ENCODE measurements at regions of chr4 and their contacts with region 1.

Region 1: DNA sequence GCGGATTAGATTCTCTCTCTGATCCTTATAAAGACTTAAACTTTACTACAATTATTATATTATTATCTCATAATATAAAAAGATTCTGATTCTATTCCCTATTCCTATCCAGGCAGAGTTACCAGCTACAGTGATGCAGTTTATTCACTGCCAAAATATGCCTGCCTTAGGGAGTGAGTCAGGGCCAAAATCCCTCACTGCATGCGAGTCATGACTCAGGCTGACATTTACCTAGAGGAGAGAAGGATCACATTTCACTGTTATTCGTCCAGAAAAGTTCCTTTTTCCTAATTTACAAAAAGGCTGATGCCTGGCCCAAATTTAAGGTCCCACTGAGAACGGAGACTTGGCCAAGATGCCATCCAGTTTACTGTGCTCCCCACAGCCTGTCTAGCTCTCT is 168.5 kb upstream of the LDB2 start:
- DNase-seq: peak in 1 of 2 donors; percentile 47
- ATAC-seq: peak; percentile 71
- H3K4me3 ChIP-seq: no peak overlapping the region
- H3K27ac ChIP-seq: peak overlapping the region in 1 of 2 donors; percentile 6
- H3K4me1 ChIP-seq: peaks cover 0 to 6% of the 10 kb centered on the region in 2 donors
- H3K27me3 ChIP-seq: no peaks in the 10 kb centered on the region

Region 2: GRCh38 chr4:17027495-17027894 is 39.5 kb before region 1 on chr4:
- intact Hi-C with region 1: loop called in 1 of 2 experiments (anchors 5 kb)
- DNase-seq: no peak
- ATAC-seq: no peak
- H3K4me3 ChIP-seq: no peak overlapping the region
- H3K27ac ChIP-seq: no peak overlapping the region
- H3K4me1 ChIP-seq: peaks cover 0 to 2% of the 10 kb centered on the region in 2 donors
- H3K27me3 ChIP-seq: peaks cover 0 to 2% of the 10 kb centered on the region in 2 donors

Region 3: GRCh38 chr4:17567271-17567670 is 500.3 kb after region 1 on chr4:
- intact Hi-C with region 1: no loop called
- DNase-seq: no peak
- ATAC-seq: no peak
- H3K4me3 ChIP-seq: no peak overlapping the region
- H3K27ac ChIP-seq: no peak overlapping the region
- H3K4me1 ChIP-seq: no peaks in the 10 kb centered on the region
- H3K27me3 ChIP-seq: no peaks in the 10 kb centered on the region

Measured in aorta (tissue), 5 donors.